ENCODE measurements at regions of chr9 and their contacts with region 1.

Region 1: GRCh38 chr9:128117613-128118471 is 9.7 kb downstream of the PTGES2 start:
- DNase-seq: peak; percentile 78
- ATAC-seq: peak; percentile 52
- H3K4me3 ChIP-seq: peak overlapping the region in 1 of 3 experiments; percentile 27; a peak in 1 of 6 replicates
- H3K27ac ChIP-seq: peak overlapping the region; percentile 18
- H3K4me1 ChIP-seq: peaks cover 55% of the 10 kb centered on the region
- H3K27me3 ChIP-seq: no peaks in the 10 kb centered on the region
- CTCF ChIP-seq: peak; percentile 100
- EP300 ChIP-seq: 0 out of 4 replicates have a peak, but pooled peaks of 1 of the 2 experiments have one; percentile 18
- POLR2A ChIP-seq: no peak
- RAD21 ChIP-seq: peak; percentile 98

Region 2: DNA sequence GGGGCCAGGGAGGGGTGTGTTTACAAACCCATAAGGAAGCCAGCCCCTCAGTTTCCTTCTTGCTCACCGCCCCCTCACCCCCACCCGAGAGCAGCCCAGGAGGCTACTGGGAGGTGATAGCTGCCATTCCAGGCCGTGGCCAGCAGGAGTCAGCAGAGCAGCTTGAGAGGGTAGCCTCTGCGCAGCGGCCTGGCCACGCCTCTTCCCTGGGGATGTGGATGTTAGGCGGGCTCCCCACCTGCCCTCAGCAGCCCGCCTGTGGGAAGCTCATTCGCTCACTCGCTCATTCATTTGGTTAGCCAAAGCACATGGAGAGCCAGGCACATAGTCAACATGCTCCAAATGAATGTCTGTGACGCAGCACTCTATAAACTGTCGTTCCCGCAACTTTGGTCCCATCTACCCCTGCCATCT is 174.1 kb before region 1 on chr9:
- CTCF ChIA-PET with region 1: no interaction called
- POLR2A ChIA-PET with region 1: no interaction called
- in situ Hi-C with region 1: no loop called
- intact Hi-C with region 1: loop called (anchors 10 kb)
- DNase-seq: peak; percentile 61
- ATAC-seq: peak; percentile 78
- H3K4me3 ChIP-seq: no peak overlapping the region
- H3K27ac ChIP-seq: no peak overlapping the region
- H3K4me1 ChIP-seq: peaks cover 49% of the 10 kb centered on the region
- H3K27me3 ChIP-seq: no peaks in the 10 kb centered on the region
- CTCF ChIP-seq: peak; percentile 92
- EP300 ChIP-seq: no peak
- POLR2A ChIP-seq: no peak
- RAD21 ChIP-seq: peak; percentile 91

Region 3: GRCh38 chr9:128098297-128099230 is 19.3 kb before region 1 on chr9:
- CTCF ChIA-PET with region 1: interaction called, 14 read pairs
- POLR2A ChIA-PET with region 1: interaction called, 40 read pairs
- in situ Hi-C with region 1: no loop called
- intact Hi-C with region 1: loop called (anchors 1 kb)
- DNase-seq: peak; percentile 98
- ATAC-seq: peak; percentile 75
- H3K4me3 ChIP-seq: peak overlapping the region; percentile 72 to 89 (median 76)
- H3K27ac ChIP-seq: peak overlapping the region; percentile 92
- H3K4me1 ChIP-seq: peaks cover 86% of the 10 kb centered on the region
- H3K27me3 ChIP-seq: no peaks in the 10 kb centered on the region; a peak in 1 of 5 replicates
- CTCF ChIP-seq: no peak
- EP300 ChIP-seq: peak in 1 of 2 experiments; percentile 43; a peak in 2 of 4 replicates
- POLR2A ChIP-seq: peak in 1 of 2 experiments; percentile 99; a peak in 2 of 4 replicates
- RAD21 ChIP-seq: no peak

Region 4: DNA sequence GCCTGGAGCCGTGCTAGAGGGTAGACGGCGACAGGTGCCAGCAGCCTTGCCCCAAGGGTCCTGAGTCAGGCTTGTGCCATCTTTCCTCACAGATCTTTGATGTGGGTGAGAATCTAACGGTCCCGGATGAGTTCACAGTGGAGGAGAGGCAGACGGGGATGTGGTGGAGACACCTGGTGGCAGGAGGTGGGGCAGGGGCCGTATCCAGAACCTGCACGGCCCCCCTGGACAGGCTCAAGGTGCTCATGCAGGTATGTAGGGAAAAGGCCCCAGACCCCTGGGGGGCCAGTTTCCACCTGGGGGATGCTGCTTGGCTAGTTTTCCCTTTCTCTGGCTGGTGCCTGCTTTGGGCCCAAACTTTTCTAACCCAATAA is 14.3 kb before region 1 on chr9:
- CTCF ChIA-PET with region 1: interaction called, 14 read pairs
- POLR2A ChIA-PET with region 1: interaction called, 40 read pairs
- in situ Hi-C with region 1: no loop called
- intact Hi-C with region 1: loop called (anchors 1 kb)
- DNase-seq: peak; percentile 41
- ATAC-seq: peak; percentile 36
- H3K4me3 ChIP-seq: peak overlapping the region in 1 of 3 experiments; percentile 38; a peak in 2 of 6 replicates
- H3K27ac ChIP-seq: peak overlapping the region; percentile 90
- H3K4me1 ChIP-seq: peaks cover 91% of the 10 kb centered on the region
- H3K27me3 ChIP-seq: no peaks in the 10 kb centered on the region; a peak in 1 of 5 replicates
- CTCF ChIP-seq: peak; percentile 65
- EP300 ChIP-seq: no peak
- POLR2A ChIP-seq: no peak
- RAD21 ChIP-seq: peak; percentile 39; the same call in 1 of the 2 replicates

Region 5: DNA sequence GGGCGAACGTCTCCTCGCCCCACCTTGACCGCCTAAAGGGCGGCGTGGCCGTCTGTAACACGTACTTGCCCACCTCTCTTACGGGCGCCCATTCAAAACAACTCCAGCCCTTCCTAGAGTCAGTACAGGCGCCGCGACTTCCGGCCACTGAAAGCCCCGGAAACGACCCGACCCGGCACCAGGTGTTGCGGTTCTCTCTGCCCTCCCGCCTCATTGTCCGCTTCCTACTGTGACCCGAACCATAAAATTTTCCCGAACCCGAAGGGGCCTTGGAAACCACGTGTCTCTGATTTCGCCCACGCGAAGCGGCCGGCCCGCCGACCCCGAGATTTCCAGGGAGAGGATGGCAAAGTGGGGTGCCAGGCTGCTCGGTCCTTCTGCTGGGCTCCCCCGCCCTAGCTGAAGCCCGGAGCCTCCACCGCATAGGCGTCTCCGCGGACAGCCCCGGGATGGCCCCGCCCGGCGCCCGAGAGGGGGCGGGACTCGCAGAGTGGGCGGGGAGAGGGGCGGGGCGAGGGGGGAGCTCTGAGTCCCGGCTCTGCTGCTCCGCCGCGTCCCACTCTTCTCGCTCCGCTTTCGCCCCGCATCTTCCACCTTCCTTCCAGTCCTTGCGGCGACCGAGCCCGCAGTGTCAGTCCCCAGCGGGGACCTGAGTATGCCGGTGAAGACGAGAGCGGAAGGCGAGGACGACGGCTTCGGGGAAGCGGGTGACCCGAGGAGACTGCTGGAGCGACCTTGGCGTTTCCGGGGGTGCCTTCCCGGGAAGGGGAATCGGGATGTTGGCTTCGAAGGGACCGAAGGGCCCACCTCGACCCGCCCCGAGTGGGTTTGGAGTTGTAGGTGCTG is 10.4 kb after region 1 on chr9:
- CTCF ChIA-PET with region 1: interaction called, 3 read pairs
- POLR2A ChIA-PET with region 1: interaction called, 6 read pairs
- in situ Hi-C with region 1: no loop called
- intact Hi-C with region 1: loop called (anchors 1 kb)
- DNase-seq: peak; percentile 88
- ATAC-seq: peak; percentile 71
- H3K4me3 ChIP-seq: peak overlapping the region; percentile 96 to 99 (median 97)
- H3K27ac ChIP-seq: peak overlapping the region; percentile 99
- H3K4me1 ChIP-seq: peaks cover 56% of the 10 kb centered on the region
- H3K27me3 ChIP-seq: no peaks in the 10 kb centered on the region
- CTCF ChIP-seq: no peak
- EP300 ChIP-seq: no peak
- POLR2A ChIP-seq: peak; percentile 47 to 76; a peak in 3 of 4 replicates
- RAD21 ChIP-seq: no peak; the same call in 1 of the 2 replicates

Region 6: DNA sequence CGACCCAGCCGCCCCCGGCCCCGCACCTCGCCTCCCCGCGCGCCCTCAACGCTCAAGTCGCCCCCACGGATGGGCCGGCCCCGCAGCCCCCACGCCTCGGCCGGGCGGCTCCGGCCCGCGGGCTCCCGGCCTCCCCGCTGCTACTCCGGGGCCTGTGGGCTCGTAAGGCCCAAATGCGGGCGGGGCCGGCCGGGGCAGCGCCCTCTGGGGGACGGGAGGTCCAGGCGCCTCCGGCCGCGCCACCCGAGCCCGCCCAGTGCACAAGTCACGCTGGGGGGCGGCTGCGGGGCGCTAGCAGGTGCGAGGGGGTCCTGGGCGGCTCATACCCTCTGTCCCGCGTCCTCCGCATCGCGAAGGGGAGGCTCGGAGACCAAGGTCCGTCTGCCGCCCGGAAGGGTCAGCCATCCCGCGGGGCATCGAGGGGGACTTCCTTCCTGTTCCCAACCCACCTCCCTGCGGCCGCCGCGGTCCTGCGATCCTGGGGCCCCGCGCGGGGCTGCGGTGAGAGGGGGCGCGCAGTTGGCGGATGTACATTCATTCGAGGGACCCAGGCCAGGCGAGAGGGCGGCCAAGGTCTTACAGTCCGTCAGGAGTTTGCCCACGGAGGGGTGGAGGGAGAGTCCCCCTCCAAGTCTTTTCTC is 73.7 kb after region 1 on chr9 and contains the start of gene CIZ1:
- CTCF ChIA-PET with region 1: no interaction called
- POLR2A ChIA-PET with region 1: no interaction called
- in situ Hi-C with region 1: no loop called
- intact Hi-C with region 1: no loop called
- DNase-seq: peak; percentile 43
- ATAC-seq: peak; percentile 96
- H3K4me3 ChIP-seq: peak within 1 kb of the TSS; percentile 75 to 95 (median 82)
- H3K27ac ChIP-seq: peak within 1 kb of the TSS; percentile 58
- H3K4me1 ChIP-seq: peaks cover 11% of the 10 kb centered on the region
- H3K27me3 ChIP-seq: no peaks in the 10 kb centered on the region
- CTCF ChIP-seq: peak; percentile 81
- EP300 ChIP-seq: no peak
- POLR2A ChIP-seq: peak; percentile 60 to 77; a peak in 3 of 4 replicates
- RAD21 ChIP-seq: peak; percentile 61
- total RNA-seq, gene CIZ1: 25.8 and 30.6 TPM in 2 replicates